ENCODE measurements at regions of chr16 and their contacts with region 1.

Region 1: GRCh38 chr16:27179500-27180072 is 23.7 kb upstream of the KDM8 start:
- DNase-seq: peak; percentile 81
- H3K4me3 Mint-ChIP-seq: no peak overlapping the region
- H3K27ac Mint-ChIP-seq: peak overlapping the region; percentile 40
- H3K4me1 Mint-ChIP-seq: peaks cover 38% of the 10 kb centered on the region
- H3K27me3 Mint-ChIP-seq: no peaks in the 10 kb centered on the region

Region 2: GRCh38 chr16:26930786-26931581 is 248.6 kb before region 1 on chr16:
- intact Hi-C with region 1: no loop called
- DNase-seq: no peak
- H3K4me3 Mint-ChIP-seq: no peak overlapping the region
- H3K27ac Mint-ChIP-seq: no peak overlapping the region
- H3K4me1 Mint-ChIP-seq: no peaks in the 10 kb centered on the region
- H3K27me3 Mint-ChIP-seq: no peaks in the 10 kb centered on the region

Region 3: GRCh38 chr16:27203429-27204231 is 24.0 kb after region 1 on chr16 and contains the start of gene KDM8:
- intact Hi-C with region 1: loop called (anchors 2 kb)
- DNase-seq: peak; percentile 100
- H3K4me3 Mint-ChIP-seq: peak within 1 kb of the TSS; percentile 90
- H3K27ac Mint-ChIP-seq: peak within 1 kb of the TSS; percentile 100
- H3K4me1 Mint-ChIP-seq: peaks cover 44% of the 10 kb centered on the region
- H3K27me3 Mint-ChIP-seq: no peaks in the 10 kb centered on the region
- total RNA-seq, gene KDM8: 13.5 and 17.3 TPM in 2 replicates

Region 4: GRCh38 chr16:27374804-27375425 is 195.3 kb after region 1 on chr16:
- intact Hi-C with region 1: loop called (anchors 2 kb)
- DNase-seq: no peak
- H3K4me3 Mint-ChIP-seq: no peak overlapping the region
- H3K27ac Mint-ChIP-seq: no peak overlapping the region
- H3K4me1 Mint-ChIP-seq: peaks cover 30% of the 10 kb centered on the region
- H3K27me3 Mint-ChIP-seq: no peaks in the 10 kb centered on the region

Measured in activated T-helper 2 cell treated with anti-CD3 and anti-CD28 coated beads, Interferon-gamma antibody, Interleukin-2, Interleukin-4, amounts not matched to agents 10 μg/mL and 5 μg/mL and 100 μg/mL, durations not matched to agents 14 hours and 24 hours and 36 hours (primary cell).